H1 (cell line): ENCODE measurements at regions of chr1 and their contacts with region 1.

Region 1: GRCh38 chr1:145845514-145846161 is at the start of gene NUDT17:
- DNase-seq: peak; percentile 38 to 93
- H3K4me3 ChIP-seq: peak within 1 kb of the TSS; percentile 43 to 77 (median 66)
- H3K27ac ChIP-seq: peak within 1 kb of the TSS; percentile 51; the same call in 1 of the 2 replicates
- H3K4me1 ChIP-seq: peaks cover 0 to 8% (median 0%) of the 10 kb centered on the region in 4 experiments; a peak in 2 of 7 replicates
- H3K27me3 ChIP-seq: no peaks in the 10 kb centered on the region
- CTCF ChIP-seq: peak; percentile 85 to 93 (median 88)
- EP300 ChIP-seq: no peak
- POLR2A ChIP-seq: peak in 1 of 2 experiments; percentile 79; a peak in 2 of 3 replicates
- RAD21 ChIP-seq: peak; percentile 40 to 59; a peak in 3 of 4 replicates
- total RNA-seq, gene NUDT17: 2.7 and 2.8 TPM in 2 replicates

Region 2: DNA sequence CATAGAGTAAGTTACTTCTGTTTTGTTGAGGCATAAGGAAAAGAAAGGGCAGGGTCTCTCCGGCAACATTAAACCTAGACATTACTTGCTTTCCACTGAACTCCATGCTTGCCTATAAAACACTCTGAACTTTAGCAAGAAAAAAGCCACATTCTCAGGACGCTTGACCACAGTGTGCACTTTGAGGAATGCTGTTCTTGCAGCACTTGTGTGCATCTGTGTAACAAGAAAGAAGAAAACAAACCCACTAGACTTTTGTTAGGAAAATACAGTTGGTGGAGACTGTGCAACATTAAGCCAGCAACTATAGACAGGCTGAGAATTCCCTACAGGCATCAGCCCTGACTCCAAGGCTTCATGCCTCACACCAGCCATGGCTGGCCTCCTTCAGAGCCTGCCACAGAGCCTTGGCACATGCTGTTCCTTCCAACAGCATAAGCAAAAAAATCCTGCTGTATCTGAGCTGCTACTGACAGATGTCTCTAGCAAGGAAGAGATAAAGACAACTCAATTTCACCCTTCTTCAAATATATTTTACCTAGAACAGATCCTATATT is 144.3 kb before region 1 on chr1:
- CTCF ChIA-PET with region 1: no interaction called
- POLR2A ChIA-PET with region 1: no interaction called
- DNase-seq: no peak
- H3K4me3 ChIP-seq: no peak overlapping the region
- H3K27ac ChIP-seq: no peak overlapping the region
- H3K4me1 ChIP-seq: no peaks in the 10 kb centered on the region
- H3K27me3 ChIP-seq: peaks cover 0 to 2% (median 0%) of the 10 kb centered on the region in 4 experiments; a peak in 1 of 7 replicates
- CTCF ChIP-seq: no peak
- EP300 ChIP-seq: no peak
- POLR2A ChIP-seq: no peak
- RAD21 ChIP-seq: no peak

Region 3: GRCh38 chr1:145858894-145859490 is 13.4 kb after region 1 on chr1 and contains the start of gene PIAS3:
- CTCF ChIA-PET with region 1: interaction called, 214 read pairs
- POLR2A ChIA-PET with region 1: interaction called, 95 read pairs
- DNase-seq: peak; percentile 72 to 95
- H3K4me3 ChIP-seq: peak within 1 kb of the TSS; percentile 63 to 95 (median 89)
- H3K27ac ChIP-seq: peak within 1 kb of the TSS; percentile 78
- H3K4me1 ChIP-seq: peaks cover 0 to 5% (median 3%) of the 10 kb centered on the region in 4 experiments; a peak in 4 of 7 replicates
- H3K27me3 ChIP-seq: no peaks in the 10 kb centered on the region
- CTCF ChIP-seq: no peak
- EP300 ChIP-seq: peak in 1 of 2 experiments; percentile 61; a peak in 1 of 3 replicates
- POLR2A ChIP-seq: no peak; a peak in 1 of 3 replicates
- RAD21 ChIP-seq: no peak
- total RNA-seq, gene PIAS3: 36.7 and 40.7 TPM in 2 replicates

Region 4: DNA sequence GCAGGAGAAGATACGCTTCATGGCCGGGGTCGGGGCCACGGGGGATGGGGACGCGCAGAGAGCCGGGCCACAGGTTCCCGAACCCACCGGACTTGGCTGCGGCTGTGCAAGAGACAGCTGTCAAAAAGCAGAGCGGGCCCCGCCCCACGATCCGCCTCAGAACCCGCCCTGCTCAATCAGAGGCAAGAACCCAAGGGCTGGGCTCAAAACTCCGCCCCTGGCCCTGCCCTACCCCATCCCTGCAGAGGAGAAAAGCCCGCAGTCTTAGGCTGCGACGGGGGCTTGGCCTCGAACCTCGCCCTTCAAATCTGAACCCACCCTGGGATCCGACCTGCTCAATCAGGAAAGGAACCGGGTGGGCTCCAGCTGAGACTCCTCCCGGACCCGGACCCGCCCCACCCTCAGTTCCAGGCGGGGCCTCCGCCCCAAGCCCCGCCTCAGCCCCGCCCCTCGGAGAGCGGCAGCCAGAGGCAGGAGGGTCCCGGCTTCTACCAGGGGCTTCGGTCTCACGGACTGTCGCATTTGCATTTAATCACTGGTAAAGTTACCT is 40.2 kb after region 1 on chr1 and contains the start of gene ANKRD35:
- CTCF ChIA-PET with region 1: interaction called, 84 read pairs
- POLR2A ChIA-PET with region 1: interaction called, 8 read pairs
- DNase-seq: peak in 1 of 2 experiments; percentile 90
- H3K4me3 ChIP-seq: peak within 1 kb of the TSS; percentile 44 to 72 (median 67)
- H3K27ac ChIP-seq: no peak within 1 kb of the TSS
- H3K4me1 ChIP-seq: no peaks in the 10 kb centered on the region; a peak in 1 of 7 replicates
- H3K27me3 ChIP-seq: peaks cover 0 to 21% (median 15%) of the 10 kb centered on the region in 4 experiments; a peak in 6 of 7 replicates
- CTCF ChIP-seq: no peak
- EP300 ChIP-seq: no peak
- POLR2A ChIP-seq: no peak
- RAD21 ChIP-seq: no peak
- total RNA-seq, gene ANKRD35: 2.2 and 3.0 TPM in 2 replicates

Region 5: GRCh38 chr1:145906954-145907753 is 61.5 kb after region 1 on chr1:
- CTCF ChIA-PET with region 1: interaction called, 66 read pairs
- POLR2A ChIA-PET with region 1: no interaction called
- DNase-seq: no peak
- H3K4me3 ChIP-seq: no peak overlapping the region
- H3K27ac ChIP-seq: no peak overlapping the region
- H3K4me1 ChIP-seq: peaks cover 0 to 3% (median 0%) of the 10 kb centered on the region in 4 experiments; a peak in 2 of 7 replicates
- H3K27me3 ChIP-seq: no peaks in the 10 kb centered on the region
- CTCF ChIP-seq: no peak
- EP300 ChIP-seq: no peak
- POLR2A ChIP-seq: no peak
- RAD21 ChIP-seq: no peak

Region 6: GRCh38 chr1:146007506-146008133 is 162.0 kb after region 1 on chr1:
- CTCF ChIA-PET with region 1: interaction called, 38 read pairs
- POLR2A ChIA-PET with region 1: interaction called, 3 read pairs
- DNase-seq: no peak
- H3K4me3 ChIP-seq: no peak overlapping the region
- H3K27ac ChIP-seq: no peak overlapping the region
- H3K4me1 ChIP-seq: no peaks in the 10 kb centered on the region; a peak in 1 of 7 replicates
- H3K27me3 ChIP-seq: no peaks in the 10 kb centered on the region
- CTCF ChIP-seq: no peak
- EP300 ChIP-seq: no peak
- POLR2A ChIP-seq: no peak
- RAD21 ChIP-seq: no peak